ENCODE measurements at regions of chr3 and their contacts with region 1.

Region 1: DNA sequence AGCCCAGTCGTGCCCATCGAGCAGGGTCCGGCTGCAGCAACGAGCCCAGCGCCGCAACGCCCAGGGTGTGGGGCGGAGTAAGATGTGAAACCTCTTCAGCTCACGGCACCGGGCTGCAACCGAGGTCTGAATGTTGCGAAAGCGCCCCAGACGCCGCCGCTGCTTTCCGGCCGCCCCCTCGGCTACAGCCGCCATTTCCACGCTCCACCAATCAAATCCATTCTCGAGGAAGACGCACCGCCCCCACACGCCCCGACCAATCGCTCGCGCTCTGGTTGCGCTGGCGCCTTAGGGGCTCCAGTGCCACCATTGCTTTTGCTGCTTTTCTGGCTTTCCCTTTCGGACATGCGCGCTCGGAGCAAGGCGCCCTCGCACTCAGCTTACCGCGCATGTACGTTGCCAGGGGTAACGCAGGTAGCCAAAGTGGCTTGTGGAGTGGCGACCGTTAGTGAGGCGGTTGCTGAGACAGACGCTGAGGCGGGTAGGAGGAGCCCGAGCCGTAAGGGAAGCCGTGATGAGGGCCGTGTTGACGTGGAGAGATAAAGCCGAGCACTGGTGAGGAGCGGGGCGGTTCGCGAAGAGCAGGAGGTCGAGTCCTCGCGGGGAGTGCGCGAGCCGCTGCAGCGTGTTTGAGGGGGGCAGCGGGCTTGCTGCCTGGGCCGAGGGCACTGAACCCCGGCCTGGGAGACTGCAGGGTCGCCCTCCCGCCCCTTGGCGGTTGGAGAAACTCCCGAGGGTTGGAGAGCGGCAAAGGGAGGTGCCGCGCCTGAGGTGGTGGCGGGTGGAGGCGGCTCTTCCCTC is at the starts of genes IFT122 and MBD4:
- DNase-seq: peak; percentile 100
- H3K4me3 Mint-ChIP-seq: peak within 1 kb of the TSS; percentile 94
- H3K27ac Mint-ChIP-seq: peak within 1 kb of the TSS; percentile 99
- H3K4me1 Mint-ChIP-seq: peaks cover 55% of the 10 kb centered on the region
- H3K27me3 Mint-ChIP-seq: no peaks in the 10 kb centered on the region
- total RNA-seq, gene IFT122: 12.3 and 13.7 TPM in 2 replicates
- total RNA-seq, gene MBD4: 40.8 and 50.7 TPM in 2 replicates

Region 2: DNA sequence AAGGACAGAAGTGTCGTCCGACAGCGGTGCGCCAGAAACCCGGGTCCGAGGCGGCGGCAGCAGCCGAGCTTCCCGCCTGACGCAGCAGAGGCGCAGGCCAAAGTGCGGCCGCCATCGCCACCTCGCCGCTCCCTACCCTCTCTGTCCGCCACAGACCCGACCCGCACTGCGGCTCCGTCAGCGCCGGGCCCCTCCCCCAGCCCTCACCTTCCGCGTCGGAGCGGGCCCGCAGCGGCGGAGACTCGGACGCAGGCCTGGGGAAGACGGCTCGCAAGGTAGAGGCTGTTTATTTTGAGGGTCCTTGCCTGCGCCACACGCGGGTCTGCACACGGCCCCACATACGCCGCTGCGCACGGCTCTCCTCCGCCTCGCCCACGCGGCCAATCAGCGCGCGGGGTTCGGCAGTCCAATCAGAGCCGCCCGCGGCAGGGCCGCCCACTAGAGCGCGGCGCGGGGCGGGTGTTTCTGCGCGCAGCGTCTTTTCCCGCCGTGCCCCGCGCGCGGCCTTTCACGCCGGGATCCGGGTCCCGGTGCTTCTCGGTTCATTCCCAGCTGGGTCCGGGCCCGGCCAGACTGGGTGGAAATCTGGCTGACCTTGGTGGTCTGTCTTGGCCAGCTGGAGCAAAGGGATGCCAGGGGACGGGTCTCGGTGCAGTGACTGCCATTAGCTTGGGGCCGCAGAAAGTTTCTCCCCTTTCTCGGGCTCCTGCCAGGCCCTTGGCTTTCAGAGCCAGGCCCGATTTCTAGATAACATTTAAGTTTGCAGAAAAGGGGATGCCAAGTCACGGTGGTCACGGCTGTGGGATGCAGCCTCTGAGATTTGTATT is 256.2 kb before region 1 on chr3 and contains the start of gene CNBP:
- intact Hi-C with region 1: loop called (anchors 10 kb)
- DNase-seq: peak; percentile 98
- H3K4me3 Mint-ChIP-seq: peak within 1 kb of the TSS; percentile 96
- H3K27ac Mint-ChIP-seq: peak within 1 kb of the TSS; percentile 99
- H3K4me1 Mint-ChIP-seq: peaks cover 33% of the 10 kb centered on the region
- H3K27me3 Mint-ChIP-seq: no peaks in the 10 kb centered on the region
- total RNA-seq, gene CNBP: 422 and 430 TPM in 2 replicates

Region 3: DNA sequence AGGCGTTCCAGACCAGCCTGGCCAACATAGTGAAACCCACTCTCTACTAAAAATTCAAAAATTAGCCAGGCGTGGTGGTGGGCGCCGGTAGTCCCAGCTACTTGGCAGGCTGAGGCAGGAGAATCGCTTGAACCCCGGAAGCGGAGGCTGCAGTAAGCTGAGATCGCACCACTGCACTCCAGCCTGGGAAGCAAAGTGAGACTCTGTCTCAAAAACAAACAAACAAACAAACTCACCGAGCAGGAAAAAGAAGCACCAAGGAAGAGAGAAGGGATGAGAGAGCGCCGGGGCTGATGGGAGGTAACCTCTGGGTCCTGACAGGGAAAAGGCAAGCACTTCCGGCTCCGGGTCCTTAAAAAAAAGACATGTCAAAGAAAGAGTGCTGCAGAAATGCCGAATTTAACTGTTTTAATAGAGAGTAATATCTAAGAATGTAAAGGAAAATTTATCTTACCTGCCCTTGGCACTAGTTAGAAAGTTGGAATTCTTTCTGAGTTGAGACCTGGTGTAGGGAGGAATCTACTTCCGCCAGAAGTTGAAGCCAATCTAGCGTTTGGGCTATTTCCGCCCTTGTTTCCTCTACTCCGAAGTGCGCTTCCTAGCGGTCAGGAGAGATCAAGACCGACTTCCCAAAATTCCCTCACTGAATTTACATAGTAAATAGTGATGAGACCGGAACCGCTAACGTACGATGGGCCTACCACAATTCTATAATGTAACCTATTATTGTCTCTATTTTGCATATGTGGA is 40.7 kb before region 1 on chr3:
- intact Hi-C with region 1: loop called (anchors 1 kb)
- DNase-seq: peak; percentile 93
- H3K4me3 Mint-ChIP-seq: peak overlapping the region; percentile 91
- H3K27ac Mint-ChIP-seq: peak overlapping the region; percentile 92
- H3K4me1 Mint-ChIP-seq: peaks cover 31% of the 10 kb centered on the region
- H3K27me3 Mint-ChIP-seq: no peaks in the 10 kb centered on the region

Region 4: GRCh38 chr3:129627429-129628168 is 187.6 kb after region 1 on chr3:
- intact Hi-C with region 1: loop called (anchors 5 kb)
- DNase-seq: peak; percentile 88
- H3K4me3 Mint-ChIP-seq: peak overlapping the region; percentile 94
- H3K27ac Mint-ChIP-seq: peak overlapping the region; percentile 91
- H3K4me1 Mint-ChIP-seq: peaks cover 20% of the 10 kb centered on the region
- H3K27me3 Mint-ChIP-seq: peaks cover 11% of the 10 kb centered on the region

Region 5: GRCh38 chr3:129793319-129793718 is 353.3 kb after region 1 on chr3:
- intact Hi-C with region 1: no loop called
- DNase-seq: no peak
- H3K4me3 Mint-ChIP-seq: no peak overlapping the region
- H3K27ac Mint-ChIP-seq: no peak overlapping the region
- H3K4me1 Mint-ChIP-seq: peaks cover 9% of the 10 kb centered on the region
- H3K27me3 Mint-ChIP-seq: no peaks in the 10 kb centered on the region